Naive thymus-derived CD8-positive, alpha-beta T cell (primary cell): ENCODE measurements at regions of chr11 and their contacts with region 1.

Region 1: DNA sequence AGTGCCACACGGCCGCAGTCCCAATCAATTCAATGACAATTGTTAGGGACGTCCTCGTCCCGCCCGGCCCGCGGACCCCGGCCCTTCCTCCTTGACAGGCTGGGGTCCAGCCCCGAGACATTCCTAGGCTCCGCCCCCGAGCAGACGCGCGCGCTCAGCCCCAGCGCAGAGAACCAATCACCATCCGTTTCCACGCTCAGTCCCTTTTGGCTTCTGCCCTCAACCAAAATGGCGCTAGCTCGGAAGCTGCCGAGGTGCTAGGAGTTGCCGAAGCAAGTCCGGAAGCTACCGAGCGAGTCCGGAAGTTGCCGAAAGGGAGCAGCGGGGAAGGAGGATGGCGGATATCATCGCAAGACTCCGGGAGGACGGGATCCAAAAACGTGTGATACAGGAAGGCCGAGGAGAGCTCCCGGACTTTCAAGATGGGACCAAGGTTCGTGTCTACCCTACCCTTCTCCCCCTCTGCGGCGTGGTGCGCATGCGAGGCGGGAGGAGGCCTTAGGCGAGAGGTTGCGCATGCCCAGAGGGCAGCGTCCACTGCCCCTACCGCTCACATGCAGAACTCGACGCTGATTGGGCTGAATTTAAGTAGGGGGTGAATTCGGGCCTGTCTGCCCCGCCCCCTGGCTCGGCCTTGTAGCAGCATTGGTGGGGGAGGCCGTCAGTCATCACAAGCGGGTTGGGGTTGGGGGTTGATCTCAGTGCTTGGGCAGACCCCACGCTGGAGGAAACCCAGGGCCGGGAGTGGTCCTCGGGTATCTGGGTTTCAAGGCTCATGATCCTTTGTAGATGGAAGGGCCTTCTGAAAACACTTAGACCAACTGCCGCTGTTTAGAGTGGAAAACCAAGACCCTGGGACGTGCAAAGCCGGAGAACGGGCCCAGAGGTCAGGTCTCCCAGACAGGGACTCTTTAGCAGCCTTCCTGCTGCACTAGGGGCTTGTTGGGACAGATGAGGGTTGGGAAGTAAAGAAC is at the start of gene AIP:
- DNase-seq: peak; percentile 90 to 99 (median 97)
- ATAC-seq: peak; percentile 75 to 78
- H3K4me3 Mint-ChIP-seq: peak within 1 kb of the TSS; percentile 86 to 100 (median 98)
- H3K27ac Mint-ChIP-seq: peak within 1 kb of the TSS; percentile 96 to 100 (median 99)
- H3K4me1 Mint-ChIP-seq: peaks cover 29 to 56% (median 53%) of the 10 kb centered on the region in 4 donors
- H3K27me3 Mint-ChIP-seq: no peaks in the 10 kb centered on the region
- polyA plus RNA-seq, gene AIP: 146 to 169 (median 146) TPM

Region 2: DNA sequence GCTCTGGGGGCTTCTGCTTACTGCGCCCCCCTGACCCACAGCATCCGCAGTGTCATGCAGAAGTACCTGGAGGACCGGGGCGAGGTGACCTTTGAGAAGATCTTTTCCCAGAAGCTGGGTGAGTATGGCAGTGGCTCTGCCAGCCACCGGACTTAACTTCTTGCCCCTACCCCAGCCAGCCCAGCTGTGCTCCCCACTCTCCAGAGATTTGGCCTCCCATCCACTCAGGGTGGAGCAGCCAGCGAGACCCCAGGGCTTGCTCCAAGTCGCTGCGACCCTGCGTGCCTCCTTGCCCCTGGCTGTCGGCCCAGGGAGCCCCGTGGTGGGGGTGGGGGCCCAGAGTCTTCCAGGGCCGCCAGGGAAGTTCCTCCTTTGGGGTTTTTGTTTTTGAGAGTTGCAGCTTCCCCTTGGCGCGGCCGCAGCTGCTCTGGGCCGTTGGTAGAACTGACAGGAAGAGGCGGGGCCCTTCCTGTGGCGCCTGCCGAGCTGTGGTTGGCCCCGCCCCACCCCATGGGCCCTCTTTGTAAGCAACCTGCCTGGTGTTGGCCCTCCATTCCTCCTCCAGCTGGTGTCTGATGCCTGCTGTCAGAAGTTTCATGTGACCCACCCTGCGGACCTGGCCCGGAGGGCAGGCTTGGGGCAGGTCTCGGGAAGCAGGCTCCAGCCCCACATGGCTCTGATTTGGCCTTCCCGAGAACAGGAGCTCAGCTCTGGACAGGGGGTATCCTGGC is 205.7 kb before region 1 on chr11:
- POLR2A ChIA-PET with region 1: interaction called, 13 read pairs
- DNase-seq: peak; percentile 84 to 95 (median 90)
- ATAC-seq: peak; percentile 89 to 96
- H3K4me3 Mint-ChIP-seq: peak overlapping the region; percentile 74 to 98 (median 86)
- H3K27ac Mint-ChIP-seq: peak overlapping the region; percentile 90 to 100 (median 98)
- H3K4me1 Mint-ChIP-seq: peaks cover 28 to 83% (median 78%) of the 10 kb centered on the region in 4 donors
- H3K27me3 Mint-ChIP-seq: no peaks in the 10 kb centered on the region

Region 3: GRCh38 chr11:67391304-67392132 is 91.6 kb before region 1 on chr11 and contains the start of gene RAD9A:
- POLR2A ChIA-PET with region 1: interaction called, 41 read pairs
- DNase-seq: peak; percentile 85 to 95 (median 90)
- ATAC-seq: peak; percentile 81 to 84
- H3K4me3 Mint-ChIP-seq: peak within 1 kb of the TSS; percentile 81 to 90 (median 87)
- H3K27ac Mint-ChIP-seq: peak within 1 kb of the TSS; percentile 68 to 93 (median 88)
- H3K4me1 Mint-ChIP-seq: peaks cover 30 to 47% (median 43%) of the 10 kb centered on the region in 4 donors
- H3K27me3 Mint-ChIP-seq: no peaks in the 10 kb centered on the region
- polyA plus RNA-seq, gene RAD9A: 6.5 to 9.4 (median 6.6) TPM

Region 4: GRCh38 chr11:67409261-67409666 is 73.8 kb before region 1 on chr11:
- POLR2A ChIA-PET with region 1: interaction called, 145 read pairs
- DNase-seq: peak; percentile 46 to 90 (median 76)
- ATAC-seq: peak; percentile 73 to 85
- H3K4me3 Mint-ChIP-seq: peak overlapping the region; percentile 93 to 99 (median 98)
- H3K27ac Mint-ChIP-seq: peak overlapping the region; percentile 53 to 98 (median 94)
- H3K4me1 Mint-ChIP-seq: peaks cover 44 to 96% (median 88%) of the 10 kb centered on the region in 4 donors
- H3K27me3 Mint-ChIP-seq: no peaks in the 10 kb centered on the region

Region 5: DNA sequence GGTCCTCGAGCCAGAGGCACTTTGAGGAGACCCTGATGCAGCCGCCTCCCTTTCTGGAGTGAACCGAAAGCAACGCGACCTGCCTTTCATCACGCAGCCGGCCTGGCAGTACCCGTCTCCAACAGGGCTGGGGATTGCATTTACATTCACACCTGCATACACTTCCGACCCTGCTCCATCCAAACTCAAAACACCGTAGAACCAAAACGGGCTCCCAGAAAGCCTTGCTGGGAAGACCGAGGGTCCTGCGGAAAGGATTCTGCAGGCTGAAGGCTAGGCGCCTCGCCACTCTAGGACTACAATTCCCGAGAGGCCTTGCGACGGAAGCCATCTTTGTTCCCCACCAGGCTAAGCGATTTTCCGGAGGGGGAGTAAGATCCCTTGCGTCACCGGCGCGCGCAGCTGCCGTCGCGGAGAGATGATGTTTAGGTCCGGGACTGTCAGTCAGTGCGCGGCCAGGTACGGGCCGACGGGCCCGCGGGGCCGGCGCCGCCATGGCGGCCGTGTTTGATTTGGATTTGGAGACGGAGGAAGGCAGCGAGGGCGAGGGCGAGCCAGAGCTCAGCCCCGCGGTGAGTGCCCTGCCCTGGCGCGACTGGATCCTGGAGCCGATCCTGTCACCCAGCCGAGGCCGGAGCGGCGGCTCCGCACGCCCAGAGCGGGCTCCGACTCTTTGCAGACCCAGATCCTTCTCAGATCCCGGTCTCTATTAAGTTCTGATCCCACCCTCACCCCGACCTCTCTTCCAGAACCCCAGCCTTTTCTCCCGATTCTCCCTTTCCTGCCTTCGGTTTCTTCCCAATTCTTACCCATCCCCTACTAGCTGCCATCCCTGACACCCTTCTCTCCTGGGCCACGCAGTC is 54.8 kb before region 1 on chr11 and contains the start of gene RPS6KB2:
- POLR2A ChIA-PET with region 1: interaction called, 126 read pairs
- DNase-seq: peak; percentile 94 to 100 (median 99)
- ATAC-seq: peak; percentile 88 to 89
- H3K4me3 Mint-ChIP-seq: peak within 1 kb of the TSS; percentile 92 to 99 (median 98)
- H3K27ac Mint-ChIP-seq: peak within 1 kb of the TSS; percentile 91 to 98 (median 96)
- H3K4me1 Mint-ChIP-seq: peaks cover 14 to 61% (median 44%) of the 10 kb centered on the region in 4 donors
- H3K27me3 Mint-ChIP-seq: no peaks in the 10 kb centered on the region
- polyA plus RNA-seq, gene RPS6KB2: 41.9 to 45.9 (median 43.2) TPM

Region 6: DNA sequence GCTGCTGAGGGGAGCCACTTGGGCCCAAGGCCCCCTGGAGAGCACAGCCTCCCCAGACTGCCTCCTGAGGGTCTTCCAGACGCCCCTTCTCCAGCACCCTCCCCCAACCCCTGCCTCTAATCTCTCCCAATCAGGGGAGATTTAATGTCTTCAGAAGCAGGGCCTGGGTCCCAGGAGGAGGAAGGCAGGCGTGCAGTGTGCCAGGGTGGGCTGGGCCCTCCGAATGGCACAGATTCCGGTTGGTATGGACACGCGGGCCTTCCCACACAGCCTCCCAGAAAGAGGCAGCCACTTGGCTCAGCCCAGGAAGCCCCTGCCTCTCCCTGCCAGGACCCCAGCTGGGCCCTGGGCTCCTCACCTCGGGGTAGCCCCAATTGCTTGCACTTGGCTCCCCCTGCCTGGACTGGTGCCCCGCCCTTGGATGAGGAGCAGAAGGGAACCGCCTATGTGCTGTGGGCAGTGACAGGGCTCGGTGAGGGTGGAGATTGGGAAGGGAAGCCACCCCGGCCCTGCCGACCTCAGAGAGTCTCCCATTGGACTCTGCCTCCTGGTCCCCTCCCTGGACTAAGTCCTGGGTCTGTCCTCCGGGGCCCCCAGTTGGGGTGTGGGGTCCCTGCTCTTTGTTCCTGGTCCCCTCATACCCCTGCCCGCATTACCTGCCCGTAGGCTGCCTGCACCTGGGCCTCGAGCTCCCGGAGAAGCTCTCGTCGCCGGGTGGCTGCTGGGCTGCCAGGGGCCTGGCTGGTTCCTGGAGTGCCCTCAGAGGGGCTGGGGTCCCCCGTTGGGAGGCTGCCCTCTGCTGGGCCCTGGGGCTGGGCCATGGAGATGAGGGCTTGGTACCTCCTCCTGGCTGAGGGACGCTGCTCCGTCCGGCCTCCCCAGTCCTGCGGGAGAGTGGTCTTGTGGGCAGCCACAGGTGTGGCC is 40.7 kb after region 1 on chr11:
- POLR2A ChIA-PET with region 1: no interaction called
- DNase-seq: no peak
- ATAC-seq: no peak
- H3K4me3 Mint-ChIP-seq: no peak overlapping the region
- H3K27ac Mint-ChIP-seq: no peak overlapping the region
- H3K4me1 Mint-ChIP-seq: no peaks in the 10 kb centered on the region
- H3K27me3 Mint-ChIP-seq: peaks cover 0 to 19% (median 5%) of the 10 kb centered on the region in 5 donors